ENCODE measurements at regions of chr15 and their contacts with region 1.

Region 1: DNA sequence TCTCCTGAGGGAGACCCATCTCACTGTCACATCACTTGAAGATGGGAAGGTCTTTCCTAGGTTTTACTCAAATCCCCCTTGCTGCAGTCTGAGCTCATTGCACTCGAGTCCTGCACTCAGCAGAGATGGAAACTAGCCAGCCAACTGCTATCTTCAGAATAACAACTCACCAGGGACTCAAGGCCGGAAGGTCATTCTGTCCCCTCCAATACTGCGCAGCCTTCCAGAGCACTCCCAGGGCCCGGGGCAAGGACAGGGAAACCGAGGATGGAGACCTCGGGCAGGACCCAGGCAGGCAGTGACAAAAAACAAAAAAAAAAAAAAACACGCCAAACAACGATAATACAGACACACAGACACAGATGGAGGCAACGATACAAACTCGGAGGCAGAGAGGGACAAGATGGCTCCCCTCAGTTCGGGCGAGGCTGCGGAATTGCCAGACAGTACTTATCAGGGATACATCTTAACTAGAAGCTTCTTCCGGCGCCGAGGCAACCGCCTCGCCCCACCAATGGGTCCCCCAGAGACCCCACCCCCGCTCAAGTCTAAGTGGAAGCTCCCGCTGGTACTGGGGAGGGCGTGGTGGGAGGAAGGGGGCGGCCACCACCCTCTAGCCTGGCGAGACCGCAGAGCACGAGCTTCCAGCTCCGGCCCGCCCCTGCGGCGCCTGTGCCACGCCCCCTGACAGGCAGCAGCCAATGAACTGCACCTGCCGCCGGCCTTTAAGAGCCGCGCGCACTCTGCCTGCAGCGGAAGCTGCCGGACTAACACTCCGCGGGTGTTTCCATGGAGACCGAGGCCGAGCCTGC is 7.0 kb upstream of the MAP1A start:
- DNase-seq: peak; percentile 97 to 99 (median 99)
- H3K4me3 ChIP-seq: peak overlapping the region; percentile 55 to 89 (median 77)
- H3K27ac ChIP-seq: peak overlapping the region; percentile 73 to 89
- H3K4me1 ChIP-seq: peaks cover 11 to 43% (median 40%) of the 10 kb centered on the region in 4 experiments
- H3K27me3 ChIP-seq: peaks cover 0 to 3% (median 0%) of the 10 kb centered on the region in 5 experiments

Region 2: DNA sequence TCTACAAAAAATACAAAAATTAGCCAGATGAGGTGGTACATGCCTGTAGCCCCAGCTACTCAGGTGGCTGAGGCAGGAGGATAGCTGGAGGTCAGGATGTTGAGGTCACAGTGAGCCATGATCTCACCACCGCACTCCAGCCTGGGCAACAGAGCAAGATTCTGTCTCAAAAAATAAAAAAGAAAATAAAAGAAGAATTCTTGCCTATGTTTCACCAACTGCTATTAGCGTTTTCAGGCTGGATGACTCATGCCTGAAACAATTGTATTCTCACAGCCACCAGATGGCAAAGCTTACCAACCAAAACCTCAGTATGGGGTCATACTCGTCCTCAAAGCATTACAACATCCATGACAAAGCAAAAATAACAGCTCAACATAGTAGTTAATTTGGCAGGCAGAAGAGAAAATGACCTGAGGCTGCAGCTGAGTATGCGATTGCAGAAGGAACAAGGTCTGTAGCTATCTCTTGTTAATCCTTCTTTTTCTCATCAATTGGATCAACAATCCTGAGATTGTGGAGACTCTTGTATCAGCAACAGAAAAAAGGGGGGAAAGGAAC is 69.6 kb before region 1 on chr15:
- CTCF ChIA-PET with region 1: interaction called, 16 read pairs
- POLR2A ChIA-PET with region 1: interaction called, 6 read pairs
- DNase-seq: peak; percentile 92 to 98 (median 97)
- H3K4me3 ChIP-seq: no peak overlapping the region
- H3K27ac ChIP-seq: peak overlapping the region; percentile 46 to 79
- H3K4me1 ChIP-seq: peaks cover 0 to 9% (median 4%) of the 10 kb centered on the region in 4 experiments
- H3K27me3 ChIP-seq: no peaks in the 10 kb centered on the region

Region 3: DNA sequence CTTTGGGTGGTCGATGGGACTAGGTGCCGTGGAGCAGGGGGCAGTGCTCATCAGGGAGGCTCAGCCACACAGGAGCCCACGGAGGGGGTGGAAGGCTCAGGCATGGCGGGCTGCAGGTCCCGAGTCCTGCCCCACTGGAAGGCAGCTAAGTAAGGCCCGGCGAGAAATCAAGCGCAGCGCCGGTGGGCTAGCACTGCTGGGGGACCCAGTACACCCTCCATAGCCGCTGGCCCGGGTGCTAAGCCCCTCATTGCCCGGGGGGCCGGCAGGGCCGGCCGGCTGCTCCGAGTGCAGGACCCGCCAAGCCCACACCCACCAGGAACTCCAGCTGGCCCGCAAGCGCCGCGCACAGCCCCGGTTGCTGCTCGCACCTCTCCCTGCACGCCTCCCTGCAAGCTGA is 36.5 kb before region 1 on chr15:
- CTCF ChIA-PET with region 1: interaction called, 10 read pairs
- POLR2A ChIA-PET with region 1: no interaction called
- DNase-seq: no peak
- H3K4me3 ChIP-seq: no peak overlapping the region
- H3K27ac ChIP-seq: no peak overlapping the region
- H3K4me1 ChIP-seq: no peaks in the 10 kb centered on the region
- H3K27me3 ChIP-seq: no peaks in the 10 kb centered on the region

Region 4: GRCh38 chr15:43483306-43484128 is 26.9 kb before region 1 on chr15:
- CTCF ChIA-PET with region 1: interaction called, 115 read pairs
- POLR2A ChIA-PET with region 1: interaction called, 3 read pairs
- DNase-seq: peak; percentile 48 to 78 (median 78)
- H3K4me3 ChIP-seq: no peak overlapping the region
- H3K27ac ChIP-seq: no peak overlapping the region
- H3K4me1 ChIP-seq: peaks cover 0 to 2% (median 0%) of the 10 kb centered on the region in 4 experiments
- H3K27me3 ChIP-seq: no peaks in the 10 kb centered on the region

Region 5: GRCh38 chr15:43492673-43493601 is 17.5 kb before region 1 on chr15 and contains the start of gene TP53BP1:
- CTCF ChIA-PET with region 1: interaction called, 115 read pairs
- POLR2A ChIA-PET with region 1: interaction called, 3 read pairs
- DNase-seq: peak; percentile 96 to 98 (median 98)
- H3K4me3 ChIP-seq: peak within 1 kb of the TSS; percentile 83 to 98 (median 87)
- H3K27ac ChIP-seq: peak within 1 kb of the TSS; percentile 84 to 97
- H3K4me1 ChIP-seq: peaks cover 10 to 20% (median 13%) of the 10 kb centered on the region in 4 experiments
- H3K27me3 ChIP-seq: no peaks in the 10 kb centered on the region

Region 6: DNA sequence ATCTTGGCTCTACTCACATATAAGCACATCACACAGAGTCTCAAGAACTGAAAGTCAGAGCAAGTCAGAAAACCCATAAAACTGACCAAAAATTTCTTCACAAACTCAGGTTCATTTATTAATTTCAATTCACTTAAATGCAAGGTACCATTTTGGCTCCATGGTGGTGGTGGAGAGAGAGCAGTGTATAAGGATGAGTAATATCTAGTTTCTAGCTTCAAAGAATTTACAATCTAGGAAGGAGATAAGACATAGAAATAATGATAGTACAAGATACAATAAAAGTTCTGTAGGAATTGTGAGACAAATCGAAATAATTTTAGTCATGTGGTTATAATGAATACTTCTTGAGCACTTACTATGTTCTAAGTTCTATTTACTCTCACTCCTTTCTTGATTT is 10.8 kb before region 1 on chr15:
- CTCF ChIA-PET with region 1: interaction called, 115 read pairs
- POLR2A ChIA-PET with region 1: no interaction called
- DNase-seq: no peak
- H3K4me3 ChIP-seq: no peak overlapping the region
- H3K27ac ChIP-seq: no peak overlapping the region
- H3K4me1 ChIP-seq: no peaks in the 10 kb centered on the region
- H3K27me3 ChIP-seq: no peaks in the 10 kb centered on the region

Region 7: GRCh38 chr15:43527016-43527801 is 16.8 kb after region 1 on chr15:
- CTCF ChIA-PET with region 1: interaction called, 13 read pairs
- POLR2A ChIA-PET with region 1: interaction called, 3 read pairs
- DNase-seq: no peak
- H3K4me3 ChIP-seq: no peak overlapping the region
- H3K27ac ChIP-seq: no peak overlapping the region
- H3K4me1 ChIP-seq: peaks cover 0 to 3% (median 0%) of the 10 kb centered on the region in 4 experiments
- H3K27me3 ChIP-seq: no peaks in the 10 kb centered on the region

Region 8: GRCh38 chr15:43648649-43649429 is 138.4 kb after region 1 on chr15 and contains the start of gene CATSPER2:
- CTCF ChIA-PET with region 1: no interaction called
- POLR2A ChIA-PET with region 1: no interaction called
- DNase-seq: no peak
- H3K4me3 ChIP-seq: no peak within 1 kb of the TSS
- H3K27ac ChIP-seq: no peak within 1 kb of the TSS
- H3K4me1 ChIP-seq: no peaks in the 10 kb centered on the region
- H3K27me3 ChIP-seq: no peaks in the 10 kb centered on the region